ENCODE measurements at regions of chr4 and their contacts with region 1.

Region 1: DNA sequence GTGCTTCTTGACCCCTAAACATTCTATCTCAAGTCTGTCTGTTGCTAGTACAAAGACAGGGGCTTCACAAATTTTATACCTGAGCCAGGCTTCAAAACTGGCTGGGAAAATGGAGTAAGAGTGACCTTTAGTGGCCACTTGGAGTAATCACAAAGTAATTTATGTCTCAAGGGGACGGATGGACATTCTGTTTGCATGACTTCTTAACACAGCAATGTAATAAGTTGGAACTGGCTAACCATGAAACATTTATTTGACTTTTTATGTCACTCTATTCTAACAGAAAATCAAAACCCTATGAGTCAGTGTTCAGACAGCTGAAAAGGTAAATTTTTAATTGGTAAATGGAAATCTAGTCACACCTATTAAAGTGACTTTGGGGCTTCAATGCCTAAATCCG is 600.6 kb downstream of the ANKRD50 start:
- DNase-seq: peak in 1 of 2 experiments; percentile 46
- H3K4me3 ChIP-seq: no peak overlapping the region
- H3K4me3 Mint-ChIP-seq: no peak overlapping the region
- H3K27ac Mint-ChIP-seq: no peak overlapping the region
- H3K4me1 ChIP-seq: no peaks in the 10 kb centered on the region
- H3K4me1 Mint-ChIP-seq: no peaks in the 10 kb centered on the region
- H3K27me3 ChIP-seq: no peaks in the 10 kb centered on the region
- H3K27me3 Mint-ChIP-seq: peaks cover 3% of the 10 kb centered on the region
- CTCF ChIP-seq: peak; percentile 45 to 50

Region 2: GRCh38 chr4:123390846-123391456 is 721.0 kb before region 1 on chr4:
- CTCF ChIA-PET with region 1: no interaction called
- POLR2A ChIA-PET with region 1: no interaction called
- intact Hi-C with region 1: loop called (anchors 5 kb)
- DNase-seq: peak in 1 of 2 experiments; percentile 26
- H3K4me3 ChIP-seq: no peak overlapping the region
- H3K4me3 Mint-ChIP-seq: no peak overlapping the region
- H3K27ac Mint-ChIP-seq: no peak overlapping the region
- H3K4me1 ChIP-seq: peaks cover 5% of the 10 kb centered on the region; the same call in 1 of the 2 replicates
- H3K4me1 Mint-ChIP-seq: peaks cover 7% of the 10 kb centered on the region
- H3K27me3 ChIP-seq: no peaks in the 10 kb centered on the region
- H3K27me3 Mint-ChIP-seq: no peaks in the 10 kb centered on the region
- CTCF ChIP-seq: peak; percentile 37 to 58

Region 3: DNA sequence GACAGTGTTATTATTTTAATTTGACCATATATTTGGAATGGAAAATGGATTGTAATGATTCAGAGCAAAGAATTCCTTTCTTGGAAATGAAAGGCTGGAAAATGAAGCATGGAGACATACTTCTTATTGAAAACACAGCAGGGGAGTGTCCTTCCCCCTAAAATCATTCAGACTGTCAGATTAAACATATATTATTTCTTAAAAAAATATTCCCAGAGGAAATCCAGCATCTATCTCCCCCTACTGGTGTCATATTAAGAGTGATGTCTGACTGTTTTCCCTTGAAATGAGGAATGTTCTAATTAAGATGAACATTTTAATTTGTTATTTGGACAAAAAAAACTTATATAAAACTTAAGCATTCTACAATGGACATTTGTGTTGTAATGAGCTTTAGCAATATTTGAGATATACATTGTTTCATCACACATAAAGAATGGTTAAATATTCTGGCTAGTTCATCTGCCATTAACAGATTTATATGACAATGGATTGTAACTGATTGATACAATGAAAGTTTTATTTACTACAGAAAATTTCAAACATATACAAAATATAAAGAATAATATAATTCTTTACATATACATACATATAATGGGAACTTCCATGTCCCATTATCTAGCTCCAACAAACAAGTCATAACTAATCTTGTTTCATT is 450.7 kb before region 1 on chr4:
- CTCF ChIA-PET with region 1: no interaction called
- POLR2A ChIA-PET with region 1: no interaction called
- intact Hi-C with region 1: loop called (anchors 10 kb)
- DNase-seq: no peak
- H3K4me3 ChIP-seq: no peak overlapping the region
- H3K4me3 Mint-ChIP-seq: no peak overlapping the region
- H3K27ac Mint-ChIP-seq: no peak overlapping the region
- H3K4me1 ChIP-seq: peaks cover 6% of the 10 kb centered on the region; the same call in 1 of the 2 replicates
- H3K4me1 Mint-ChIP-seq: peaks cover 20% of the 10 kb centered on the region
- H3K27me3 ChIP-seq: no peaks in the 10 kb centered on the region
- H3K27me3 Mint-ChIP-seq: no peaks in the 10 kb centered on the region
- CTCF ChIP-seq: peak; percentile 41 to 54

Region 4: GRCh38 chr4:124167602-124168001 is 55.7 kb after region 1 on chr4:
- CTCF ChIA-PET with region 1: no interaction called
- POLR2A ChIA-PET with region 1: no interaction called
- intact Hi-C with region 1: no loop called
- DNase-seq: no peak
- H3K4me3 ChIP-seq: no peak overlapping the region
- H3K4me3 Mint-ChIP-seq: no peak overlapping the region
- H3K27ac Mint-ChIP-seq: no peak overlapping the region
- H3K4me1 ChIP-seq: no peaks in the 10 kb centered on the region
- H3K4me1 Mint-ChIP-seq: no peaks in the 10 kb centered on the region
- H3K27me3 ChIP-seq: no peaks in the 10 kb centered on the region
- H3K27me3 Mint-ChIP-seq: peaks cover 2% of the 10 kb centered on the region
- CTCF ChIP-seq: no peak

Region 5: GRCh38 chr4:124179506-124180186 is 67.7 kb after region 1 on chr4:
- CTCF ChIA-PET with region 1: no interaction called
- POLR2A ChIA-PET with region 1: no interaction called
- intact Hi-C with region 1: no loop called
- DNase-seq: no peak
- H3K4me3 ChIP-seq: no peak overlapping the region
- H3K4me3 Mint-ChIP-seq: no peak overlapping the region
- H3K27ac Mint-ChIP-seq: no peak overlapping the region
- H3K4me1 ChIP-seq: no peaks in the 10 kb centered on the region
- H3K4me1 Mint-ChIP-seq: no peaks in the 10 kb centered on the region
- H3K27me3 ChIP-seq: no peaks in the 10 kb centered on the region
- H3K27me3 Mint-ChIP-seq: peaks cover 3% of the 10 kb centered on the region
- CTCF ChIP-seq: no peak

Region 6: DNA sequence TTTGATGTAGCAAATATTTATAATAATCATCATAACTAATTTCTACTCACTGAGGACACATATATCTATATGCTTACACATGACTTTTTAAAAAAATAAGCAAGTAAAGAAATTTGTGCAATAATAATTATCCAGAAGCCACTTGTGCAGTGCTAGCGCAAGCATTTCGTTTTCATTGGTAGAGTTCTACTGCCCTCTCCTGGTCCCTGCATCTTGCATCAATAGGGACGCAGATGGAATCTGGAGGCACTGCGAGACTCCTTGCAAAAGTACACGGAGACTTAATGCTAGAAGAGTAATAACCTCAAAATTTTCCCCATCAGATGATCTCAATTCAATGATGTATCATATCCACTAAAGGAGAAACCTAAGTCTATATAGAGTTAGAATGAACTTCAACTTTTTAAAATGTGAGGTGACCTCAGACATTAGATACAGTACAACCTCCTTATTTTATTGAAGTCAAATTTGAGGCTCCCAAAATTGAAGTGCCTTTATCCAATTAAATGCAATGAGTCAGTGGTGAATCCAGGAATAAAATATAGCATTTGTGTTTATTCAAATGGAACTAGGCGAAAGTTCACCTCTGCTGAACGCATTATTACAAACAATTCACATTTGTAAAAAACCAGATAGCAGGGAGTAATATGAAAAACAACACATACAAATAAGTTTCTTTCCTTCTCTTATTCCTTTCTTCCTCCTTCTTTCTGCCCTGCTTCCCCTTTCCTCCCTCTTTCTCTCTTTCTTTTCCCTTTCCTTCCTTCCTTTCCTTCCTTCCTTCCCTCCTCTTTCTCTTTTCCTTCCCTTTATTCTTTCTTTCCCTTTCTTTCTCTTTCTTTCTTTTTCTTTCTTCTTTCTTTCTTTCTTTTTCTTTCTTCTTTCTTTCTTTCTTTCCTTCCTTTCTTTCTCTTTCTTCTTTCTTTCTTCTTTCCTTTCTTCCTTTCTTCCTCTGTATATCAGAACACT is 150.6 kb after region 1 on chr4:
- CTCF ChIA-PET with region 1: no interaction called
- POLR2A ChIA-PET with region 1: no interaction called
- intact Hi-C with region 1: loop called (anchors 1 kb)
- DNase-seq: peak; percentile 58 to 74
- H3K4me3 ChIP-seq: no peak overlapping the region
- H3K4me3 Mint-ChIP-seq: no peak overlapping the region
- H3K27ac Mint-ChIP-seq: no peak overlapping the region
- H3K4me1 ChIP-seq: no peaks in the 10 kb centered on the region
- H3K4me1 Mint-ChIP-seq: no peaks in the 10 kb centered on the region
- H3K27me3 ChIP-seq: no peaks in the 10 kb centered on the region
- H3K27me3 Mint-ChIP-seq: peaks cover 6% of the 10 kb centered on the region
- CTCF ChIP-seq: peak; percentile 77 to 79

Measured in Caco-2 (cell line).